IMR-90 (cell line): ENCODE measurements at regions of chr4 and their contacts with region 1.

Region 1: GRCh38 chr4:172850838-172851237 is 317.8 kb upstream of the GALNT7 start:
- DNase-seq: peak; percentile 95
- ATAC-seq: peak; percentile 79
- H3K4me3 ChIP-seq: no peak overlapping the region
- H3K27ac ChIP-seq: no peak overlapping the region
- H3K4me1 ChIP-seq: no peaks in the 10 kb centered on the region; the same call in 1 of the 2 replicates
- H3K27me3 ChIP-seq: no peaks in the 10 kb centered on the region
- CTCF ChIP-seq: no peak
- POLR2A ChIP-seq: no peak
- RAD21 ChIP-seq: no peak

Region 2: GRCh38 chr4:172881645-172882044 is 30.8 kb after region 1 on chr4:
- CTCF ChIA-PET with region 1: no interaction called
- POLR2A ChIA-PET with region 1: interaction called, 11 read pairs
- dilution Hi-C with region 1: no loop called
- in situ Hi-C with region 1: no loop called
- intact Hi-C with region 1: no loop called
- DNase-seq: no peak
- ATAC-seq: no peak
- H3K4me3 ChIP-seq: no peak overlapping the region
- H3K27ac ChIP-seq: no peak overlapping the region
- H3K4me1 ChIP-seq: no peaks in the 10 kb centered on the region
- H3K27me3 ChIP-seq: no peaks in the 10 kb centered on the region
- CTCF ChIP-seq: no peak
- POLR2A ChIP-seq: no peak
- RAD21 ChIP-seq: no peak

Region 3: GRCh38 chr4:172998527-172999469 is 148.0 kb after region 1 on chr4:
- CTCF ChIA-PET with region 1: no interaction called
- POLR2A ChIA-PET with region 1: no interaction called
- dilution Hi-C with region 1: no loop called
- in situ Hi-C with region 1: no loop called
- intact Hi-C with region 1: loop called (anchors 5 kb)
- DNase-seq: peak; percentile 79
- ATAC-seq: peak; percentile 12; the same call in 1 of the 2 replicates
- H3K4me3 ChIP-seq: no peak overlapping the region
- H3K27ac ChIP-seq: 0 out of 2 replicates have a peak overlapping the region, but pooled peaks have one; percentile 22
- H3K4me1 ChIP-seq: peaks cover 13% of the 10 kb centered on the region; the same call in 1 of the 2 replicates
- H3K27me3 ChIP-seq: no peaks in the 10 kb centered on the region; the same call in 1 of the 2 replicates
- CTCF ChIP-seq: no peak
- POLR2A ChIP-seq: no peak
- RAD21 ChIP-seq: no peak